AG04450 (cell line): ENCODE measurements at regions of chr2 and their contacts with region 1.

Region 1: DNA sequence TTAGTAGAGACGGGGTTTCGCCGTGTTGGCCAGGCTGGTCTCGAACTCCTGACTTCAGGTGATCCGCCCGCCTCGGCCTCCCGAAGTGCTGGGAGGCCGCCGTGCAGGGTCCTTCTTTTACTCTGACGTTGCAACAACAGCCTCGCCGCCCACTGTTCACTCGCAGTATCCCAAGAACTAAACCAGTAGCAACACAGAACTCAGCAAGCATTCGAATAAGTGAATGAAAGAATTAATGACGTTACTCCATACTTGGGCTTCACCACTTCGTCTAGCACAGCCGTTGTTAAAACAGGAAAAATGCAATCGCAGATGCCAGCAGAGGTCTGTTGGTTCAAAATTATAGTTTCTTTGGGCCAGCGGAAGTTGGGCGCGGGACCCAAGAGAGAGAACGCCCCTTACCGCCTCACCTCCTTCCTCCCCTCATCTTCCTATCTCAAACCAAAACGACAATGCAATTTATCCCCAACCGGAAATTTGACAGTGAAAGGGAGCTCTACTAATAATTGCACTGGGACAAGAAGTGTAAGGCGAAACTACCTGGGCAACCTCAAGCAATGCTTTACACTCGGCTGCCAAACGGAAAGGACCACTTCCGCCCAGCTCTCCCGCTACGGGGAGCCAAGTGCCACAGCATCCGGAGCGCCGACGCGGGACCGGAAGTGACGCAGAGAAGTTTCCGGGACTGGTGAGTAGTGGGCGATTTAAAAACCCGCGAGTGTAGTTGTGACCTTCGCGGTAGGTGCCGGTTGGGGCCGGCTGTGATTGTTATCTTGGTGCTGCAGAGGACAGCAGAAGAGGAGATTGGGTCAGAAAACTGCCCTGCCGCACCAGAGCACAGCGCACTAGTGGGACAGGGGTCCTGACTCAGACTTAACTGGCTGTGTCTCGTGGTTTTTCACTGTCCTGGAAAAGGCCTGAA is at the starts of genes NIF3L1 and PPIL3:
- DNase-seq: peak; percentile 91
- H3K4me3 ChIP-seq: peak within 1 kb of the TSS; percentile 78
- H3K27ac ChIP-seq: peak within 1 kb of the TSS; percentile 93
- H3K27me3 ChIP-seq: no peaks in the 10 kb centered on the region
- CTCF ChIP-seq: no peak
- polyA plus RNA-seq, gene NIF3L1: 36.6 and 38.7 TPM in 2 replicates
- polyA plus RNA-seq, gene PPIL3: 31.0 and 40.8 TPM in 2 replicates

Region 2: GRCh38 chr2:200864176-200864976 is 24.6 kb before region 1 on chr2 and contains the start of gene CLK1:
- CTCF ChIA-PET with region 1: interaction called, 5 read pairs
- POLR2A ChIA-PET with region 1: interaction called, 22 read pairs
- DNase-seq: peak; percentile 81
- H3K4me3 ChIP-seq: peak within 1 kb of the TSS; percentile 76
- H3K27ac ChIP-seq: peak within 1 kb of the TSS; percentile 98
- H3K27me3 ChIP-seq: no peaks in the 10 kb centered on the region
- CTCF ChIP-seq: no peak
- polyA plus RNA-seq, gene CLK1: 66.0 and 103 TPM in 2 replicates